HCT116 (cell line): ENCODE measurements at regions of chr5 and their contacts with region 1.

Region 1: DNA sequence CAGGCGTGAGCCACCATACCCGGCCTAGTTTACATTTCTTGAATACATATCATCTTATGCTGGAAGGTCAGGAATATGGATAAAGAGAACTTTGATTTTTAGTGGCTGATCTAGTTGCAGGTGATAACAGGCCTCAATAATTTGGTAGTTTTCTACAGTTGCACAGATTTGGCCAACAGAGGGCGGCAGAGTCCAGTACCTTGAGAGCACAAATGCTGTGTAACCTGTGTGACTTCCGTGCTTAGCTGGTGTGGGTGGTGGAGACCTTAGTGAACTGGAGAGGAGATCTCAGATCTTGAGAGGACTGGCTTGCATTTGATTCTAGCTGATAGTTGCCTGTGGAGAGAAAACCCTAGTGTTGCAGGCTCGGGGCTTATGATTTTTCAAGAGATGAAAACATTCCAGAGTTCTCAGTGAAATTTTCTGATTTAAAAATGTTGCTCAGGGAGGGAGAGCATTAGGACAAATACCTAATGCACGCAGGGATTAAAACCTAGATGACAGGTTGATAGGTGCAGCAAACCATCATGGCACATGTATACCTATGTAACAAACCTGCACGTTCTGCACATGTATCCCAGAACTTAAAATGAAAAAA is 17.4 kb upstream of the GPR151 start:
- DNase-seq: peak; percentile 73
- ATAC-seq: peak; percentile 97
- H3K4me3 ChIP-seq: no peak overlapping the region
- H3K27ac ChIP-seq: no peak overlapping the region
- H3K4me1 ChIP-seq: peaks cover 0 to 3% of the 10 kb centered on the region in 2 experiments; a peak in 2 of 4 replicates
- H3K27me3 ChIP-seq: no peaks in the 10 kb centered on the region
- CTCF ChIP-seq: peak; percentile 70 to 88 (median 77)
- POLR2A ChIP-seq: no peak
- RAD21 ChIP-seq: peak; percentile 91

Region 2: GRCh38 chr5:146520731-146521130 is 12.6 kb before region 1 on chr5:
- CTCF ChIA-PET with region 1: interaction called, 15 read pairs
- POLR2A ChIA-PET with region 1: interaction called, 3 read pairs
- RAD21 ChIA-PET with region 1: no interaction called
- intact Hi-C with region 1: no loop called
- DNase-seq: peak; percentile 2
- ATAC-seq: peak; percentile 51
- H3K4me3 ChIP-seq: no peak overlapping the region
- H3K27ac ChIP-seq: no peak overlapping the region
- H3K4me1 ChIP-seq: peaks cover 0 to 6% of the 10 kb centered on the region in 2 experiments; a peak in 1 of 4 replicates
- H3K27me3 ChIP-seq: no peaks in the 10 kb centered on the region; the same call in 1 of the 2 replicates
- CTCF ChIP-seq: no peak
- POLR2A ChIP-seq: no peak
- RAD21 ChIP-seq: no peak

Region 3: DNA sequence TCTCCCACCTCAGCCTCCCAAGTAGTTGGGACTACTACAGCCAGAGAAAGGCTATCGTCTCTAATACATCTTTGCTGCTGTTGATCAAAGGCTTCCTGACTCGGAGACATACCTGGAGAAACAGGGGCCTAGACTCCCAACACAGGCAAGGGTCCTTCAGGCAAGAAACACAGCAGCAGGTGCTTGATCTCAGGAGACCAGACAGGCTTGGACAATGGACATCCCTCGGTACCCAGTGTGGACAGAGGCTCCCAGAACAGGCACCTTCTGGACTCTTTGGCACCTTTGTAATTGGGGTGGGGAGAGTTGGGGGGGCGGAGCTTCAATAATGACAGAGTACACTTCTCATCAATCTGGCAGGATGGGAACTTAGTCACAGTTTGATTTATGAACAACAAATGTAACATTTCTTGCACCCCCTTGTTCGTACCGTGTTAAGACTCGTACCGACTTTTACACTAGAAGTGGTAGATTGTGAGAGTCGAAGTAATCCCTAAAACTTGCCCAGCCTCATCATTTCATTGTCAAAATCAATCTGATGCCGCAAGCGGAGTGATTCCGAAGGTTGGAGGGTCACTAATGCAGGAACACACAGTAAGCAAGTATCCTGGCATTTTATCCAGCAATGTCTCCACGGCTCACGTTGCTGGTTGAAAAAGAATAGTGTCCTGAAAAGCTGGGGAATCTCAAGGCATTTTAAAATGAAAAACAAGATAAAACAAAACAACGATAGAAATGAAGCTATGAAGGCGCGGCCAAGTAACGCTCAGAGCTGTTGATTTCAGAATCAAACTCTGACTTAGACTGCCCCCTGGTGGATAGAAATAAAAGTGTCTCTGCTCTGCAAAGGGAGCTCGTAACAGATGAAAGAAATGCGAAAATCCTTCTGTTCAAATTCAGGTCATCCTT is 655.1 kb after region 1 on chr5:
- CTCF ChIA-PET with region 1: interaction called, 55 read pairs
- POLR2A ChIA-PET with region 1: no interaction called
- RAD21 ChIA-PET with region 1: interaction called, 3 to 5 read pairs
- intact Hi-C with region 1: loop called (anchors 1 kb)
- DNase-seq: peak; percentile 42
- ATAC-seq: peak; percentile 93
- H3K4me3 ChIP-seq: no peak overlapping the region
- H3K27ac ChIP-seq: no peak overlapping the region
- H3K4me1 ChIP-seq: no peaks in the 10 kb centered on the region
- H3K27me3 ChIP-seq: peaks cover 3% of the 10 kb centered on the region; the same call in 1 of the 2 replicates
- CTCF ChIP-seq: peak; percentile 65 to 88 (median 71)
- POLR2A ChIP-seq: no peak
- RAD21 ChIP-seq: peak; percentile 84

Region 4: GRCh38 chr5:147601652-147602051 is 1068.3 kb after region 1 on chr5:
- CTCF ChIA-PET with region 1: no interaction called
- POLR2A ChIA-PET with region 1: no interaction called
- RAD21 ChIA-PET with region 1: no interaction called
- intact Hi-C with region 1: no loop called
- DNase-seq: no peak
- ATAC-seq: no peak
- H3K4me3 ChIP-seq: no peak overlapping the region
- H3K27ac ChIP-seq: no peak overlapping the region
- H3K4me1 ChIP-seq: no peaks in the 10 kb centered on the region
- H3K27me3 ChIP-seq: 0 out of 2 replicates have a peak, but pooled peaks cover 2% of the 10 kb centered on the region
- CTCF ChIP-seq: no peak
- POLR2A ChIP-seq: no peak
- RAD21 ChIP-seq: no peak